ENCODE measurements at regions of chr12 and their contacts with region 1.

Region 1: GRCh38 chr12:57182921-57183790 is 33.4 kb upstream of the NXPH4 start:
- DNase-seq: peak; percentile 68 to 91 (median 86)
- ATAC-seq: peak; percentile 93 to 98 (median 97)
- H3K4me3 ChIP-seq: no peak overlapping the region
- H3K27ac ChIP-seq: no peak overlapping the region
- H3K4me1 ChIP-seq: no peaks in the 10 kb centered on the region
- H3K27me3 ChIP-seq: no peaks in the 10 kb centered on the region
- CTCF ChIP-seq: peak; percentile 76 to 89 (median 80)

Region 2: GRCh38 chr12:56803750-56804149 is 379.4 kb before region 1 on chr12:
- intact Hi-C with region 1: no loop called
- DNase-seq: no peak
- ATAC-seq: peak in 1 of 4 donors; percentile 46
- H3K4me3 ChIP-seq: no peak overlapping the region
- H3K27ac ChIP-seq: no peak overlapping the region
- H3K4me1 ChIP-seq: no peaks in the 10 kb centered on the region
- H3K27me3 ChIP-seq: no peaks in the 10 kb centered on the region
- CTCF ChIP-seq: no peak

Region 3: DNA sequence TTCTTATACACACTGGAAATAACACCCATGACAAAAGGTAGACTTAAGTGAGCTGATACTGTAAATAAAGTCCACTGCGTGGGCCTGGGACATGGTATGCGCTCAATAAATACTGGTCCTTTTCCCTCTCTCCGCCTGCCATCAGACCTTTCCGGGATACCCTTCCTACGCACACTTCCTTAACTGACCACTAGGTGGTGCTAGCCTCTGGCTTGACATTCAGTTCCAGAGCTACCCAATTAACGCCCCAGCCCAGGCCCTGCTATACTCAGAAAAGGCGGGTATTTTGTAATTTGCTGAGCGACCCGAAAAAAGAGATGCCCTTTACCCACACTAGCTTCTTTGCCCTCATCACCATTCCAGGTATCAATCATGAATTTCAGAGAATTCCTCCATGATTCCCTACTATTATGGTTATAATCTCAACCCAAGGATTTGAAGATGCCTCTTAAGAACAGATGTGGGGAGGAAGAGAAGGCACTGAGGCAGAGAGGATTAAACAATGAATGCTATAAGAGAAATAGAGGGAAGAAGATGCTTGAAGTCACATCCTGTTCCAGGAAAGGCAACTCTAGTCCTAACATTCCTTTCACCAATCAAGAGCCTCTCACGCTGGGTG is 58.8 kb before region 1 on chr12:
- intact Hi-C with region 1: loop called in 2 of 3 experiments (anchors 2 to 5 kb)
- DNase-seq: peak in 5 of 6 donors; percentile 61 to 82 (median 68)
- ATAC-seq: peak in 3 of 4 donors; percentile 39 to 44 (median 43)
- H3K4me3 ChIP-seq: no peak overlapping the region
- H3K27ac ChIP-seq: no peak overlapping the region
- H3K4me1 ChIP-seq: peaks cover 0 to 9% (median 7%) of the 10 kb centered on the region in 3 donors
- H3K27me3 ChIP-seq: no peaks in the 10 kb centered on the region
- CTCF ChIP-seq: peak; percentile 91 to 99 (median 96)

Region 4: DNA sequence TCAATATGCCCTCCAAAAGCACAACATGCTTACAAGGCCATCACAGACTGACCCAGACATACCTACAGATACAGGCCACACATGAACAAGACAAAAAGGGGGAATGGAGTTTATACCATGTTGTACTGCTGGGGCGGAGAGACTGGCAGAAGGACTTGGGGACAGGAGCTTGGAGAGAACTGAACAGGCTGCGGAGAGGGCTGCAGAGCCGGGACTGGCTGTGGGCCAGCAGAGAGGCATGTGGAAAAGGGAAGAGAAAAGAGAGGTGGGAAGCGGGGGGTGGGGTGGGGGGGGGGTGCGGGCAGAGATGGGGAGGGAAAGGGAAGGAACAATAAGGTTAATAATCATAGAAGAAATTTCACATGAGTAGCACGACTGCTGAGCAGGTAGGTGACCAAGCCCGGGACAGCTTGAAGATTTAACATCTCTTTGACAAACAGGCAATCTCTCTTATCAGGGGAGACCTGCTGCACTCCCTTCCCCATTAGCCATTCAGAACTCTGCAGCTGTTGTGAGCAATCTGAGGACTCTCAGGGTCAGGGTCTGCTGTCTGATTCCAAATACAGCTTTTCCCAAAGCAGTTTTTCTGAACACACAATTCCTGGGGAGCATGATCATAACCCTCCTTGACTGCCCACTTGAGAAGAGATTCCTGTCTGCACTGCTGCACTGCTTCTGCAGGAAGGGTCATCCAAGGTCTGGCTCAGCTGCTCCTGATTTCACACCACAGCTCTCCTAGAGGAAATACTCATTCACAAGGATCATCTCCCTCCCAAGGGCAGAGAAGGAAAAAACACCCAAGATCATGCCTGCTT is 89.4 kb after region 1 on chr12:
- intact Hi-C with region 1: no loop called
- DNase-seq: no peak
- ATAC-seq: no peak
- H3K4me3 ChIP-seq: no peak overlapping the region
- H3K27ac ChIP-seq: no peak overlapping the region
- H3K4me1 ChIP-seq: no peaks in the 10 kb centered on the region
- H3K27me3 ChIP-seq: no peaks in the 10 kb centered on the region
- CTCF ChIP-seq: no peak

Measured in pancreas (tissue), 10 donors.